Esophagus muscularis mucosa (tissue), 4 donors: ENCODE measurements at regions of chr1 and their contacts with region 1.

Region 1: DNA sequence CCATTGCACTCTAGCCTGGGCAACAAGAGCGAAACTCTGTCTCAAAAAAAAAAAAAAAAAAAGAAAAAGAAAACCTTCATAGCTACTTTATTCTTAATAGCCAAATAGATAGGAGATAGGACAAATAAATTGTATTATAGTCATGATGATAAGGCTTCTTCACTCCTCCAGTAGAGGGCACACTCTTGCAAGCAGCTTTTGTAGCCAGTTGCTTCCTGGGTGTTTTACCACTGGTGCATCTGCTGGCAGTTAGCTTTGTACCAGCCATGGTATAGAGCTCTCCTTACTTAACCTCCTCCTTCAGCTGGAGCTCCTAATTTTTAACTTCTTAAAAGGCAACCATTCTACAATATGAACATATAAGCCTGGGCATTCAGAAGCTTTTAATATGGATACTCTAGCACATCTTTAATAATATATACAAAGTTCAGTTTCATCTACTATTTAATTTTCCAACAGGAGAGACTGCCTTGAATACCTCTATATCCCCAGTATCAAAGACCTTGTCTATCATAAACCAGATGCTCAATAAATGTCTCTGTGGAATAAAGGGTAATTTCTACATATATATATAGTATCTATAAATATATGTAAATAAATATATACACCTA is 35.8 kb downstream of the EVI5 start:
- DNase-seq: no peak
- H3K4me3 ChIP-seq: no peak overlapping the region
- H3K27ac ChIP-seq: no peak overlapping the region
- H3K4me1 ChIP-seq: peaks cover 0 to 10% (median 5%) of the 10 kb centered on the region in 4 donors
- H3K27me3 ChIP-seq: no peaks in the 10 kb centered on the region
- CTCF ChIP-seq: peak; percentile 59 to 67 (median 62)
- EP300 ChIP-seq: no peak
- POLR2A ChIP-seq: no peak

Region 2: GRCh38 chr1:92817986-92818764 is 69.0 kb after region 1 on chr1:
- intact Hi-C with region 1: loop called (anchors 2 kb)
- DNase-seq: no peak
- H3K4me3 ChIP-seq: no peak overlapping the region
- H3K27ac ChIP-seq: no peak overlapping the region
- H3K4me1 ChIP-seq: no peaks in the 10 kb centered on the region
- H3K27me3 ChIP-seq: no peaks in the 10 kb centered on the region
- CTCF ChIP-seq: peak; percentile 61 to 68 (median 67)
- EP300 ChIP-seq: no peak
- POLR2A ChIP-seq: no peak